ENCODE measurements at regions of chr3 and their contacts with region 1.

Region 1: DNA sequence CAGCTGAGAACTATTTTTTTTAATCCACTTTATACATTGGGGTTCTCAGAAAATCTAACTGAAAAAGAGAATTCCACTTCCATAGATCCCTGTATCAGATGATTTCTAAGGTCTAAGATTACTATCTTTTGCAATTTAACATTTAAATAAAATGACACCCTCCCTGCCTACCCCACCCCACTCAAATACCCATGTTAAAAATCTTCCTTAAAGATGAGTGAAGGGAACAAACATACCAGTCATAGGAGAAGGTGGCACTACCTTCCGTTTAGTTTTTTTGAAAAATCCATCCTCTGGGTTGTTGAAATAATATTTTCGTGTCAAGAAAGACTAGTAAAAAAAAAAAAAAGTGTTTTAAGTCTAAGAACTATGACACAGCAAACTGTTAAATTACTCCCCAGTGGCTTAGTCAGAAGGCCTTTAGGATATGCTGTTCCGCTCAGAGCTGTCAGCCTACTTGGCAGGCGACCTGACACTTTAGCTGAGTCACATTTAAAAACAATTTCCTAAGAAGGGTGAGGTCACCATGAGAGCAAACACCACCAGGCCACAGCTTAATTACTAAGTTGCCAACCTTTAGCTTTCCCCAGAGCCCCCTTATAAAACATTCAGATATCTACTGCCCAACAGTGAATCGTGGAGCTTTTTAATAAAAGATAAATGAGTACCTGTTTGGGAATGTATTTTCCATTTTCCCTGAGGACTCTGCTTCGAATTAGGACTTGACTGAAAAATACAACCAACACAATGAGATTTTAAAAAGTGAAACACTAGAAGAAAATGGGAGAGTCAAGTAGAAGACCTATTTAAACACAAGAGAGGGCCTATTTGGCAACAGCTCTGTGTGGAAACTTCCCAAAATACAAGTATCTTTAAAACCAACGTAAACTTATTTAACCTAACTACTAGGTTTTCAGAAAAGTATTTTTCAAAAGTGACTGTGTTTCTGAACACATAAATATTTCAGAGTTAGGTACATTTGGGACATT is 9.6 kb downstream of the EMC3 start:
- DNase-seq: peak; percentile 81 to 88
- ATAC-seq: peak; percentile 93 to 96 (median 96)
- H3K4me3 ChIP-seq: peak overlapping the region; percentile 62
- H3K27ac ChIP-seq: peak overlapping the region; percentile 91
- H3K4me1 ChIP-seq: peaks cover 39% of the 10 kb centered on the region
- H3K27me3 ChIP-seq: no peaks in the 10 kb centered on the region
- CTCF ChIP-seq: no peak

Region 2: GRCh38 chr3:9627901-9628633 is 348.9 kb before region 1 on chr3:
- intact Hi-C with region 1: no loop called
- DNase-seq: no peak
- ATAC-seq: no peak
- H3K4me3 ChIP-seq: no peak overlapping the region
- H3K27ac ChIP-seq: no peak overlapping the region
- H3K4me1 ChIP-seq: no peaks in the 10 kb centered on the region
- H3K27me3 ChIP-seq: no peaks in the 10 kb centered on the region
- CTCF ChIP-seq: no peak

Region 3: DNA sequence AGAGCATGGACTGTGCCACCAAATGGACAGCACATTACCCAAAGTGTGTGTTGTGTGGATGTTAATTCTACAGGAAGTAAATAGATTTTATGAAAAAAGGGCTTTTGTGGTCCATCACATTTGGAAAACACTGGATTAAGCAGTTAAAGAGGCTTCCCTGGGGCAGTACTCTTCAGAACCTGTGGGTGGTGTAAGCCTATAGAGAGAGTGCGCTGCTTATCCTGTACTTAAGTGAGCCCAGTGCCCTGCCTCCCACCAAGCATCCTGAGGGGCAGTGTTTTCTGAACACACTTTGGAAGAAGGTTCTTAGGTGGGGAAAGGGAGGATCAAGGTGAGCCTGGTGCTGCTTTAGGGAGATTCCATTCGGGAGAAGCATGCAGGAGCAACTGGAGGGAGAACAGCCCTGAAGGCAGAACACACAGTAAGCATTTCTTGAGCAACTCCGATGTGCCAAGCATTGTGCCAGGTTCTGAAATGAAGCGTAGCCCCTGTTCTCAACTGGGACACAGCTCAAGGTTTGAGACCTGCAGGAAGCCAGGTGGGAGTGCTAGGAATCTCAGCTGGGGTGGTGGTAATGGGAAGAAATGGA is 156.0 kb before region 1 on chr3:
- intact Hi-C with region 1: no loop called
- DNase-seq: no peak
- ATAC-seq: no peak
- H3K4me3 ChIP-seq: no peak overlapping the region
- H3K27ac ChIP-seq: no peak overlapping the region
- H3K4me1 ChIP-seq: peaks cover 6% of the 10 kb centered on the region
- H3K27me3 ChIP-seq: no peaks in the 10 kb centered on the region
- CTCF ChIP-seq: no peak

Region 4: DNA sequence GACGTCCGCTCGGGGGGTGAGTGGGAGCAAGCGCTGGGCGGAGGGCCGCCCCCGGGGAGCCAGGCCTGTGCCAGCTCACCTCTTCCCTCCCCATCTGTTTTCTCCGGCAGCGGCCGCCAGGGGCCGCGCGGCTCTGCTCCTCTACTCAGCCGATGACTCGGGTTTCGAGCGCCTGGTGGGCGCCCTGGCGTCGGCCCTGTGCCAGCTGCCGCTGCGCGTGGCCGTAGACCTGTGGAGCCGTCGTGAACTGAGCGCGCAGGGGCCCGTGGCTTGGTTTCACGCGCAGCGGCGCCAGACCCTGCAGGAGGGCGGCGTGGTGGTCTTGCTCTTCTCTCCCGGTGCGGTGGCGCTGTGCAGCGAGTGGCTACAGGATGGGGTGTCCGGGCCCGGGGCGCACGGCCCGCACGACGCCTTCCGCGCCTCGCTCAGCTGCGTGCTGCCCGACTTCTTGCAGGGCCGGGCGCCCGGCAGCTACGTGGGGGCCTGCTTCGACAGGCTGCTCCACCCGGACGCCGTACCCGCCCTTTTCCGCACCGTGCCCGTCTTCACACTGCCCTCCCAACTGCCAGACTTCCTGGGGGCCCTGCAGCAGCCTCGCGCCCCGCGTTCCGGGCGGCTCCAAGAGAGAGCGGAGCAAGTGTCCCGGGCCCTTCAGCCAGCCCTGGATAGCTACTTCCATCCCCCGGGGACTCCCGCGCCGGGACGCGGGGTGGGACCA is 44.0 kb before region 1 on chr3:
- intact Hi-C with region 1: loop called in 1 of 2 experiments (anchors 1 kb)
- DNase-seq: peak; percentile 88 to 93
- ATAC-seq: peak; percentile 81 to 85 (median 82)
- H3K4me3 ChIP-seq: peak overlapping the region; percentile 79
- H3K27ac ChIP-seq: peak overlapping the region; percentile 94
- H3K4me1 ChIP-seq: peaks cover 26% of the 10 kb centered on the region
- H3K27me3 ChIP-seq: no peaks in the 10 kb centered on the region
- CTCF ChIP-seq: peak; percentile 72